Heart left ventricle (tissue), 16 donors: ENCODE measurements at regions of chr5 and their contacts with region 1.

Region 1: GRCh38 chr5:155189981-155190380 is 176.4 kb downstream of the KIF4B start:
- DNase-seq: no peak
- ATAC-seq: no peak
- H3K4me3 ChIP-seq: no peak overlapping the region
- H3K27ac ChIP-seq: no peak overlapping the region
- H3K4me1 ChIP-seq: peaks cover 0 to 22% (median 0%) of the 10 kb centered on the region in 12 donors
- H3K27me3 ChIP-seq: no peaks in the 10 kb centered on the region
- CTCF ChIP-seq: no peak
- POLR2A ChIP-seq: no peak

Region 2: GRCh38 chr5:155091063-155091648 is 98.8 kb before region 1 on chr5:
- intact Hi-C with region 1: loop called in 3 of 10 experiments (anchors 5 kb)
- DNase-seq: peak in 4 of 5 donors; percentile 36 to 45 (median 38)
- ATAC-seq: peak; percentile 79 to 90 (median 85)
- H3K4me3 ChIP-seq: no peak overlapping the region
- H3K27ac ChIP-seq: peak overlapping the region; percentile 2 to 89 (median 64)
- H3K4me1 ChIP-seq: peaks cover 0 to 29% (median 8%) of the 10 kb centered on the region in 12 donors
- H3K27me3 ChIP-seq: no peaks in the 10 kb centered on the region
- CTCF ChIP-seq: no peak
- POLR2A ChIP-seq: no peak

Region 3: GRCh38 chr5:155098433-155098832 is 91.5 kb before region 1 on chr5:
- intact Hi-C with region 1: loop called in 3 of 10 experiments (anchors 5 kb)
- DNase-seq: no peak
- ATAC-seq: peak in 2 of 4 donors; percentile 23 to 27
- H3K4me3 ChIP-seq: no peak overlapping the region
- H3K27ac ChIP-seq: no peak overlapping the region
- H3K4me1 ChIP-seq: peaks cover 0 to 18% (median 2%) of the 10 kb centered on the region in 12 donors
- H3K27me3 ChIP-seq: no peaks in the 10 kb centered on the region
- CTCF ChIP-seq: no peak
- POLR2A ChIP-seq: no peak

Region 4: GRCh38 chr5:155147222-155147621 is 42.8 kb before region 1 on chr5:
- intact Hi-C with region 1: loop called in 2 of 10 experiments (anchors 5 kb)
- DNase-seq: no peak
- ATAC-seq: no peak
- H3K4me3 ChIP-seq: no peak overlapping the region
- H3K27ac ChIP-seq: no peak overlapping the region
- H3K4me1 ChIP-seq: peaks cover 0 to 11% (median 0%) of the 10 kb centered on the region in 12 donors
- H3K27me3 ChIP-seq: no peaks in the 10 kb centered on the region
- CTCF ChIP-seq: peak in 8 of 12 donors; percentile 7 to 33 (median 20)
- POLR2A ChIP-seq: no peak

Region 5: GRCh38 chr5:155353231-155353630 is 163.2 kb after region 1 on chr5:
- intact Hi-C with region 1: no loop called
- DNase-seq: no peak
- ATAC-seq: no peak
- H3K4me3 ChIP-seq: no peak overlapping the region
- H3K27ac ChIP-seq: no peak overlapping the region
- H3K4me1 ChIP-seq: no peaks in the 10 kb centered on the region
- H3K27me3 ChIP-seq: no peaks in the 10 kb centered on the region
- CTCF ChIP-seq: no peak
- POLR2A ChIP-seq: no peak

Region 6: DNA sequence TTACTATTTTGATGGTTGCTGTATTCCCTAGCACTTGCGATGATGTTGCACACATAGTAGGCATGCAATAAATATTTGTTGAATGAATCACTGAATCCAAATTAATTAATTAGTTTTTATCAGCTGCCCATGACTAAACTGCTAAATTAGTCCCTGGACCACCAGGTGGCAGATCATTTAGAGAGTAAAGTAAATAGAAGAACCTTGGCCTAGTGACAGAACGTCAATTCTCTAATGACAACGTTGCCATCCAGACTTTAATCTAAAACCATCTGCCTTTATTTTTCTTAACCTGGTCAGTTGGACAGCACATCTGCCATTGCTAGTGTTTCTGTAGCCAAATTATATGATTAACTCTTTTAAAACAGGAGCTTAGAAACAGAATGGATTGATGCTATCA is 281.0 kb after region 1 on chr5:
- intact Hi-C with region 1: loop called in 1 of 10 experiments (anchors 10 kb)
- DNase-seq: no peak
- ATAC-seq: no peak
- H3K4me3 ChIP-seq: no peak overlapping the region
- H3K27ac ChIP-seq: no peak overlapping the region
- H3K4me1 ChIP-seq: no peaks in the 10 kb centered on the region
- H3K27me3 ChIP-seq: no peaks in the 10 kb centered on the region
- CTCF ChIP-seq: no peak
- POLR2A ChIP-seq: no peak

Region 7: DNA sequence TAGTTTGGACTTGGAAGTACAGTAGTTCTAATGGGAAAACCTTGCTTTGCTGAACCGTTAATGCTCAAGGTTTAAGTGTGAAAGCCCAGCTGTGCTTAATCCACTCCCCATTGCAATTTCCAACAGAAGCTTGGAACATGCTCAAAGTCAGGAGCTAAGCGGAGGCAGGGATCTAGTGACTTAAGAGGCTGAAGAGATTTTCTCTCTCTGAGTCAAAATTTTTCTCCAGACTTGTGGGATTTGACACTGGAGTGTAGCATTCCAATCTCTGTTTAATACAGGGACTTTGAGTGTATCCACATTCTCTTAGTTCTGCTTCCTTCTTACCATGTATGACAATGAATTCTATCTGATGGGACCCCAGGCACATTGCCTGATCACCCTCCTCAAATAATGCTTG is 295.4 kb after region 1 on chr5:
- intact Hi-C with region 1: loop called in 5 of 10 experiments (anchors 2 to 10 kb)
- DNase-seq: no peak
- ATAC-seq: no peak
- H3K4me3 ChIP-seq: no peak overlapping the region
- H3K27ac ChIP-seq: no peak overlapping the region
- H3K4me1 ChIP-seq: peaks cover 0 to 15% (median 0%) of the 10 kb centered on the region in 12 donors
- H3K27me3 ChIP-seq: no peaks in the 10 kb centered on the region
- CTCF ChIP-seq: no peak
- POLR2A ChIP-seq: no peak